MCF 10A (cell line): ENCODE measurements at regions of chr5 and their contacts with region 1.

Region 1: DNA sequence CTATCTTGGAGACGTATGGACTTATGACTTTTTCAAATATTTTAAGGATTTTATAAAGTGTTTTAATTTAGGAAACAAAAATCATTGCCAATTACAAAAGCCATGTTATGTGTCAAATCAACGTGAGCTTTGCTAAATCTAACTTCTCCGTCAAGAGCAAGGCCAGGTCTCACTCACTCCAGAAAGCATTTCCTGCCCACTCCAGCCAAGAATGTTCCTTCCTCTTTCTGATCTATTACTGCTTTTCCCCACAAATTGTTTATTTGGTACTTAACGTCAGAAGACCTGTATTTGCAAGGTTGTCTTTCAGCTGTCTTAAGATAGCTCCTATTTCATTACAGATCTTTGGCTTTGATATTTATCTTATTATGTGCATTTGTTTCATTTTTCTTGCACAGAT is 193.5 kb upstream of the HAPLN1 start:
- DNase-seq: no peak
- H3K4me3 Mint-ChIP-seq: no peak overlapping the region
- H3K27ac Mint-ChIP-seq: no peak overlapping the region
- H3K4me1 Mint-ChIP-seq: no peaks in the 10 kb centered on the region
- H3K27me3 Mint-ChIP-seq: peaks cover 35% of the 10 kb centered on the region
- CTCF ChIP-seq: no peak

Region 2: GRCh38 chr5:83899326-83899970 is 14.8 kb before region 1 on chr5:
- CTCF ChIA-PET with region 1: interaction called, 10 read pairs
- POLR2A ChIA-PET with region 1: no interaction called
- intact Hi-C with region 1: no loop called
- DNase-seq: no peak
- H3K4me3 Mint-ChIP-seq: no peak overlapping the region
- H3K27ac Mint-ChIP-seq: no peak overlapping the region
- H3K4me1 Mint-ChIP-seq: no peaks in the 10 kb centered on the region
- H3K27me3 Mint-ChIP-seq: no peaks in the 10 kb centered on the region
- CTCF ChIP-seq: no peak